ENCODE measurements at regions of chr6 and their contacts with region 1.

Region 1: GRCh38 chr6:70955441-70956190 is 1.2 kb downstream of the B3GAT2 start:
- DNase-seq: peak; percentile 72 to 83 (median 81)
- H3K4me3 ChIP-seq: peak overlapping the region; percentile 47 to 51
- H3K4me3 Mint-ChIP-seq: peak overlapping the region; percentile 75 to 88 (median 78)
- H3K27ac ChIP-seq: no peak overlapping the region
- H3K27ac Mint-ChIP-seq: peak overlapping the region in 1 of 7 donors; percentile 7
- H3K4me1 ChIP-seq: peaks cover 12% of the 10 kb centered on the region
- H3K4me1 Mint-ChIP-seq: peaks cover 6 to 26% (median 10%) of the 10 kb centered on the region in 4 donors
- H3K27me3 ChIP-seq: peaks cover 13% of the 10 kb centered on the region
- H3K27me3 Mint-ChIP-seq: peaks cover 40 to 43% of the 10 kb centered on the region in 2 donors

Region 2: GRCh38 chr6:70221025-70221714 is 734.4 kb before region 1 on chr6:
- CTCF ChIA-PET with region 1: interaction called, 11 read pairs
- POLR2A ChIA-PET with region 1: no interaction called
- intact Hi-C with region 1: no loop called
- DNase-seq: peak in 4 of 5 donors; percentile 0 to 25 (median 10)
- H3K4me3 ChIP-seq: no peak overlapping the region
- H3K4me3 Mint-ChIP-seq: no peak overlapping the region
- H3K27ac ChIP-seq: no peak overlapping the region
- H3K27ac Mint-ChIP-seq: no peak overlapping the region
- H3K4me1 ChIP-seq: no peaks in the 10 kb centered on the region
- H3K4me1 Mint-ChIP-seq: no peaks in the 10 kb centered on the region
- H3K27me3 ChIP-seq: no peaks in the 10 kb centered on the region
- H3K27me3 Mint-ChIP-seq: peaks cover 5 to 6% of the 10 kb centered on the region in 2 donors

Region 3: DNA sequence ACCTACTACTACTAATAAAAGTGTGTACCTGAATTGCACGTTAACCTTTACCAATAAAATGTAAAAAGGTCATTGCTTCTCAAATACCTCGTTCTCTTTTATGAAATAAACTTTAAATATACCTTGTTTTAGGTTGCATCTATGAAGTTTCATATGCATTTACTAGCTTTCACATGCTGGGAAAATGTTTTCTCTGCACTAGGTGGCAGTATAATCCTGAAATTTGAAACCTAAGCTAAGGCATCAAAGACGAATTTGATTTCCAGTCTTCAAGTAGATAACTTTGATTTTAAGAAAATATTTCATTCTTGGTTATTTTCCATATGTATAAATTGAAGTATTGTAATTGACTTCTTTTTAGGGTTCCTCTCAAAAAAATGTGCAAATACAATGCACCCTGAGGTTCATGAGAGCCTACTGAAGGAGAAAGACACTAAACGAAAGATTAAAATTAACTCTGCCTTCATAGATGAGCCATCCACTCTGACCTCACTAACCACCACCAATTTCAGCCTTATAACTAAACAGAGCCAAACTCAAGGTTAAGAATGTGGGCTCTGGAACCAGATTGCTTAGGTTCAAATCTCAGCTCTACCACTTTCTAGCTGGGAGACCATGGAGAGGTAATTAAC is 645.4 kb before region 1 on chr6:
- CTCF ChIA-PET with region 1: interaction called, 12 read pairs
- POLR2A ChIA-PET with region 1: no interaction called
- intact Hi-C with region 1: loop called (anchors 2 kb)
- DNase-seq: peak in 4 of 5 donors; percentile 4 to 15 (median 12)
- H3K4me3 ChIP-seq: no peak overlapping the region
- H3K4me3 Mint-ChIP-seq: no peak overlapping the region
- H3K27ac ChIP-seq: no peak overlapping the region
- H3K27ac Mint-ChIP-seq: no peak overlapping the region
- H3K4me1 ChIP-seq: no peaks in the 10 kb centered on the region
- H3K4me1 Mint-ChIP-seq: peaks cover 0 to under 1% (median 0%) of the 10 kb centered on the region in 4 donors
- H3K27me3 ChIP-seq: no peaks in the 10 kb centered on the region
- H3K27me3 Mint-ChIP-seq: peaks cover 11 to 13% of the 10 kb centered on the region in 2 donors

Region 4: GRCh38 chr6:70369332-70369950 is 586.2 kb before region 1 on chr6:
- CTCF ChIA-PET with region 1: interaction called, 11 read pairs
- POLR2A ChIA-PET with region 1: no interaction called
- intact Hi-C with region 1: no loop called
- DNase-seq: peak; percentile 53 to 62 (median 58)
- H3K4me3 ChIP-seq: no peak overlapping the region
- H3K4me3 Mint-ChIP-seq: no peak overlapping the region
- H3K27ac ChIP-seq: no peak overlapping the region
- H3K27ac Mint-ChIP-seq: no peak overlapping the region
- H3K4me1 ChIP-seq: no peaks in the 10 kb centered on the region
- H3K4me1 Mint-ChIP-seq: no peaks in the 10 kb centered on the region
- H3K27me3 ChIP-seq: no peaks in the 10 kb centered on the region
- H3K27me3 Mint-ChIP-seq: peaks cover 6 to 16% of the 10 kb centered on the region in 2 donors

Region 5: DNA sequence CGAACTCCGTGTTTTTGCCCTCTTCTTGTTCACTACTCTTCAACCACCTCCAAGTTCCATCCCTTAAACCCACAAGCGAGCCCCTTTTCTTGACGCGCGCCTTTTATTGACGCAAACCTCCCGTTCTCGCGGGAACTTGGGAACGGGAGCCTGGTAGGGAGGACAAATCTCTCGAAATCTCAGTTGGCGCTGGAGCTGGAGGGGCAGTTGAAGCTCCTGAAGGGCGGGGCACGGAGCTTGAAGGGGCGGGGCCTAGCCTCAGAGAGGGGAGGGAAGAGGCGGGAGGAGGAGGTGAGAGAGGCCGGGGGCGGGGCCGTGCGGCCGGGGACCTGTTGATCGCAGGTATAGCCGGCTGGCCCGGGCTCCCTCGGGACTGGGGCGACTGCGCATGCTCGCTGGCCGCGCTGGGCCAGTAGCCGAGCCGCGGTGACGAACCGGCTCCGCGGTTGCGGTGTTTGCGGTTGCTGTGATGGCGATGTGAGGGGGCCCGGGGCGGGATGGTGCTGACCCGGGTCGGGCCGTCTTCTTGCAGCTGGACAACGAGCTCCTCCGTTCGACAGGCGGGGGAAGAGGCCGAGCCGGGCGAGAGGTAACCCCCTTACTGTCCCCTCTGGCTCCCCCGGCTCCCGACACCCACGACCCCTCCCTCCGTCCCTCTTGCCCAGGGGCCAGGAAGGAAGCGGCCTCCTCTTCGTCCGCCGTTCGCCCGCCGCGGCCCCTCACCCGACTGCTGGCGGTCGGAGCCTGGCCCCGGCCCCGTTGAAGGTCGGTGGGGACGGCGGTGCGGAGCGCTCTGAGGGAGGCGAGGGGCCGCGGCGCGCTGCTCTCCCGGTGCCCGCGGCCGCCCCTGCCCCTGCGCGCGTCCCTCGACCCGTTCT is 542.3 kb before region 1 on chr6 and contains the start of gene FAM135A:
- CTCF ChIA-PET with region 1: no interaction called
- POLR2A ChIA-PET with region 1: no interaction called
- intact Hi-C with region 1: loop called (anchors 2 kb)
- DNase-seq: peak; percentile 90 to 96 (median 93)
- H3K4me3 ChIP-seq: peak within 1 kb of the TSS; percentile 59 to 62
- H3K4me3 Mint-ChIP-seq: peak within 1 kb of the TSS; percentile 93 to 97 (median 95)
- H3K27ac ChIP-seq: peak within 1 kb of the TSS; percentile 56
- H3K27ac Mint-ChIP-seq: peak within 1 kb of the TSS; percentile 90 to 96 (median 92)
- H3K4me1 ChIP-seq: peaks cover 17% of the 10 kb centered on the region
- H3K4me1 Mint-ChIP-seq: peaks cover 13 to 26% (median 20%) of the 10 kb centered on the region in 4 donors
- H3K27me3 ChIP-seq: no peaks in the 10 kb centered on the region
- H3K27me3 Mint-ChIP-seq: peaks cover 0 to 2% of the 10 kb centered on the region in 2 donors
- total RNA-seq, gene FAM135A: 11.3 to 14.5 TPM

Region 6: DNA sequence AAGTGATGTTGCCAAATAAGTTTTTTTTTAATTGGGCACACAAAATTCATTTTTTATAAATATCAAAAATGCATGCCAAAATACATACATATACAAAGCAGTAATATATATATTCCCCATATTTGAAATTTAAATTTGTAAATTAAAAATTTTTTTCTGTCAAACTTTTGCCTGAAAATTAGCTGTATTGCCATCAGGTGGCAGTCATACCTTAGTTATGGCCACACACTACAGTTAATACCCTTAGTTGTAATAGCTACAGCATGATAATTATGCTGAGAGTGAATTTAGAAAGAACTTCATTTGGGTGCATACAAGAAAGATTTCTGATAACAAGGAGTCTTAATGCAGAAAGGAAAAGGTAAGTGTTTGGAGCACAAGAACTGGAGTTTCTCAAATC is 435.0 kb before region 1 on chr6:
- CTCF ChIA-PET with region 1: interaction called, 22 read pairs
- POLR2A ChIA-PET with region 1: no interaction called
- intact Hi-C with region 1: loop called (anchors 2 kb)
- DNase-seq: peak; percentile 12 to 41 (median 28)
- H3K4me3 ChIP-seq: no peak overlapping the region
- H3K4me3 Mint-ChIP-seq: no peak overlapping the region
- H3K27ac ChIP-seq: no peak overlapping the region
- H3K27ac Mint-ChIP-seq: no peak overlapping the region
- H3K4me1 ChIP-seq: no peaks in the 10 kb centered on the region
- H3K4me1 Mint-ChIP-seq: peaks cover 0 to 7% (median 6%) of the 10 kb centered on the region in 4 donors
- H3K27me3 ChIP-seq: no peaks in the 10 kb centered on the region
- H3K27me3 Mint-ChIP-seq: no peaks in the 10 kb centered on the region

Region 7: DNA sequence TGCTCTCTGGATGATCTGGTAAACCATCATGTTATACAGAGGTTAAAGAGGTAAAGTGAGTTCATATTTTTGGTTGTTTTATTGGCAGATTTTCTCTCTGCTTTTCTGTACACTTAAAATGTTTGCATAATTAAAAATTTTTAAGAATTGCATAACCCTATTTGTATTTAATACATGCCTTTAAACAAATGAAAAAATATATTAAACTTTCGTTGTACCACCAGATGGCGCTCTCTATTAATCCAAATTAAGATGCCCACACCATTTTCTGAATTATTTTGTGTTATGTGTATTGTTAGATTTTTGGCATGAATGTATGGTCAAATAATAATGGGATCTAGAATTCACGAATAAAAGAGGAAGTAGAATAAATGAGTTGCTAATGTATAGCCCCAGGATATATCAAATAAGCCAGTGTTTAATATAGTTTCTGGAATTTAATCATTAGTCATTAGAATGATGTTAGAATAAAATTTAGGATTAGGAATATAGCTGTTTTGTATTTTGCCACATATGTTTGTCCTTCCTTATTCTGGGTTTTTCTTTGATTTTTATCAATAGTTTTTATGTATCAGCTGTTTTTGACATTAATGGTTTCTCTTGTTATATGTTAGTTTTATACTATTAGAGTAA is 249.0 kb before region 1 on chr6:
- CTCF ChIA-PET with region 1: interaction called, 42 read pairs
- POLR2A ChIA-PET with region 1: no interaction called
- intact Hi-C with region 1: loop called (anchors 1 kb)
- DNase-seq: peak in 4 of 5 donors; percentile 38 to 49 (median 48)
- H3K4me3 ChIP-seq: no peak overlapping the region
- H3K4me3 Mint-ChIP-seq: no peak overlapping the region
- H3K27ac ChIP-seq: no peak overlapping the region
- H3K27ac Mint-ChIP-seq: peak overlapping the region in 1 of 7 donors; percentile 23
- H3K4me1 ChIP-seq: peaks cover 32% of the 10 kb centered on the region
- H3K4me1 Mint-ChIP-seq: peaks cover 39 to 68% (median 53%) of the 10 kb centered on the region in 4 donors
- H3K27me3 ChIP-seq: no peaks in the 10 kb centered on the region
- H3K27me3 Mint-ChIP-seq: no peaks in the 10 kb centered on the region

Region 8: GRCh38 chr6:71139249-71139648 is 183.6 kb after region 1 on chr6:
- CTCF ChIA-PET with region 1: no interaction called
- POLR2A ChIA-PET with region 1: no interaction called
- intact Hi-C with region 1: no loop called
- DNase-seq: peak in 1 of 5 donors; percentile 21
- H3K4me3 ChIP-seq: no peak overlapping the region
- H3K4me3 Mint-ChIP-seq: no peak overlapping the region
- H3K27ac ChIP-seq: no peak overlapping the region
- H3K27ac Mint-ChIP-seq: no peak overlapping the region
- H3K4me1 ChIP-seq: no peaks in the 10 kb centered on the region
- H3K4me1 Mint-ChIP-seq: no peaks in the 10 kb centered on the region
- H3K27me3 ChIP-seq: no peaks in the 10 kb centered on the region
- H3K27me3 Mint-ChIP-seq: peaks cover 2 to 6% of the 10 kb centered on the region in 2 donors

Region 9: DNA sequence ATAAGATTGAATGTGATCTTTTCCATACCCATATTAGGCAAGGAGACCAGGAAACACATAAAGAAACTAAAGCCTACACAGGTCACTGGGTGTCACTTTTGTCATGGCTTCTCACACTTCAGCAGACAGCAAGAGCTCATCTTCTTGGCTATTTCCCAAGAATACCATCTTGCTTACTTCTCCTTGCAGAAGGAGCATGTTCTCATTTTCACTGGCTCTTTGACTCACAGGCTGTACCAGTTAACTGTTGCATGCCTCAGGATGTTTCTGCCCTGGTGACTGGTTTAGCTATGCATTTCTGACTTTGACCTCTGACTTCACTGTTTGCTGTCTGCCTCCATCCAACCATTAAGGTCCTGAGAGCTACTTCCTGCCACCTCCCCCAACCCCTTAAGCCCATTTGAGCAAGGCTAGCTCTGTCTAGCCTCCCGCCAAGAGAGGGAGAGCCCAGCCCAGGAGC is 292.7 kb after region 1 on chr6:
- CTCF ChIA-PET with region 1: no interaction called
- POLR2A ChIA-PET with region 1: no interaction called
- intact Hi-C with region 1: no loop called
- DNase-seq: no peak
- H3K4me3 ChIP-seq: no peak overlapping the region
- H3K4me3 Mint-ChIP-seq: no peak overlapping the region
- H3K27ac ChIP-seq: no peak overlapping the region
- H3K27ac Mint-ChIP-seq: no peak overlapping the region
- H3K4me1 ChIP-seq: no peaks in the 10 kb centered on the region
- H3K4me1 Mint-ChIP-seq: peaks cover 2 to 13% (median 5%) of the 10 kb centered on the region in 4 donors
- H3K27me3 ChIP-seq: no peaks in the 10 kb centered on the region
- H3K27me3 Mint-ChIP-seq: peaks cover 0 to 3% of the 10 kb centered on the region in 2 donors